HepG2 (cell line): ENCODE measurements at regions of chr2 and their contacts with region 1.

Region 1: GRCh38 chr2:240856151-240856980 is 12.3 kb upstream of the AGXT start:
- DNase-seq: peak; percentile 87
- ATAC-seq: peak; percentile 86
- H3K4me3 ChIP-seq: peak overlapping the region in 2 of 3 experiments; percentile 9 to 63; a peak in 3 of 6 replicates
- H3K27ac ChIP-seq: peak overlapping the region; percentile 88
- H3K4me1 ChIP-seq: peaks cover 46% of the 10 kb centered on the region
- H3K27me3 ChIP-seq: peaks cover 3 to 23% of the 10 kb centered on the region in 2 experiments; a peak in 3 of 5 replicates
- CTCF ChIP-seq: peak; percentile 99
- EP300 ChIP-seq: 0 out of 4 replicates have a peak, but pooled peaks of 1 of the 2 experiments have one; percentile 22
- POLR2A ChIP-seq: peak in 1 of 2 experiments; percentile 25; a peak in 2 of 4 replicates
- RAD21 ChIP-seq: peak; percentile 100

Region 2: DNA sequence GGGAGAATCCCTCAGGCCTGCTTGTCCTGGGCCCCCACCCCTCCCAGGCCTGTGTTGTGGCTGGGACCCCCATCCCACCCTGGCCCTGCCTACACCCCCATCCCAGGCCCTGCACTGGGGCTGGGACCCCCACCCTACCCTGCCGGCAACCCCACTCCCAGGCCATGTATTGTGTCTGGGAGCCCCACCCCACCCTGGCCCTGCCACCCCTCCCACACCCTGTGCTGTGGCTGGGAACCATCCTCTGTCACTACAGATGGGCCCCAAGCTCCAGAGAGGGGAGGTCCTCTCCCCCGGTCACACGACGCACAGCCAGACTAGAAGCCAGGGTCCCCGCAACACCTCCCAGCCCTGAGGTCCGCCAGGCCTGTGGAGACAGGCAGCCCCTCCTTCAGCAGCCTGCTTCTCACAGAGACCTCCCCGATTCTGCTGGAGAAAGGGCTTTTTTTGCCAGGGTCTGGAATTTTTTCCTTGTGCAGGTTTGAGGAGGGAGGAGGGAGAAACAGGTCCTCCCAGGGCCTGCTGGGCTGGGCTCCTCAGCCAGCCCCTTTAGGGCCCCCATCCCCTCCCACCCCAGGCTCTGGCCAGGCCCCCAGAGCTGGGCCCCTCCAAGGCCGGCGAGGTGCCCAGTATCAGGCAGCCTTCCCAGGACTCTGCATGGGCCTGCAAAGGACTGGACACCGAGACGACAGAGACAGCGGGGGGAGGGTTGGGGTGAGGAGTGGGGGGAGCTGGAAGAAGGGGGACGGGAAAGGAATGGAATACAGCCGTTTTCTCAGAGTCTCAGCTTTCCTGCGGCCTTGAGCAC is 64.3 kb before region 1 on chr2:
- CTCF ChIA-PET with region 1: no interaction called
- POLR2A ChIA-PET with region 1: no interaction called
- in situ Hi-C with region 1: no loop called
- intact Hi-C with region 1: no loop called
- DNase-seq: no peak
- ATAC-seq: no peak
- H3K4me3 ChIP-seq: no peak overlapping the region
- H3K27ac ChIP-seq: no peak overlapping the region
- H3K4me1 ChIP-seq: peaks cover 19% of the 10 kb centered on the region
- H3K27me3 ChIP-seq: peaks cover 28 to 84% of the 10 kb centered on the region in 2 experiments
- CTCF ChIP-seq: no peak
- EP300 ChIP-seq: no peak
- POLR2A ChIP-seq: no peak
- RAD21 ChIP-seq: no peak

Region 3: GRCh38 chr2:240868286-240869108 is 12.1 kb after region 1 on chr2 and contains the start of gene AGXT:
- CTCF ChIA-PET with region 1: interaction called, 13 read pairs
- POLR2A ChIA-PET with region 1: interaction called, 83 read pairs
- in situ Hi-C with region 1: no loop called
- intact Hi-C with region 1: no loop called
- DNase-seq: peak; percentile 71
- ATAC-seq: peak; percentile 74
- H3K4me3 ChIP-seq: peak within 1 kb of the TSS in 2 of 3 experiments; percentile 26 to 52; a peak in 4 of 6 replicates
- H3K27ac ChIP-seq: peak within 1 kb of the TSS; percentile 89
- H3K4me1 ChIP-seq: peaks cover 98% of the 10 kb centered on the region
- H3K27me3 ChIP-seq: 0 out of 5 replicates have a peak, but pooled peaks cover 0 to under 1% of the 10 kb centered on the region in 2 experiments
- CTCF ChIP-seq: peak; percentile 47; the same call in 1 of the 2 replicates
- EP300 ChIP-seq: 0 out of 4 replicates have a peak, but pooled peaks of 1 of the 2 experiments have one; percentile 14
- POLR2A ChIP-seq: peak in 1 of 2 experiments; percentile 36; a peak in 1 of 4 replicates
- RAD21 ChIP-seq: no peak
- total RNA-seq, gene AGXT: 30.5 and 41.9 TPM in 2 replicates

Region 4: DNA sequence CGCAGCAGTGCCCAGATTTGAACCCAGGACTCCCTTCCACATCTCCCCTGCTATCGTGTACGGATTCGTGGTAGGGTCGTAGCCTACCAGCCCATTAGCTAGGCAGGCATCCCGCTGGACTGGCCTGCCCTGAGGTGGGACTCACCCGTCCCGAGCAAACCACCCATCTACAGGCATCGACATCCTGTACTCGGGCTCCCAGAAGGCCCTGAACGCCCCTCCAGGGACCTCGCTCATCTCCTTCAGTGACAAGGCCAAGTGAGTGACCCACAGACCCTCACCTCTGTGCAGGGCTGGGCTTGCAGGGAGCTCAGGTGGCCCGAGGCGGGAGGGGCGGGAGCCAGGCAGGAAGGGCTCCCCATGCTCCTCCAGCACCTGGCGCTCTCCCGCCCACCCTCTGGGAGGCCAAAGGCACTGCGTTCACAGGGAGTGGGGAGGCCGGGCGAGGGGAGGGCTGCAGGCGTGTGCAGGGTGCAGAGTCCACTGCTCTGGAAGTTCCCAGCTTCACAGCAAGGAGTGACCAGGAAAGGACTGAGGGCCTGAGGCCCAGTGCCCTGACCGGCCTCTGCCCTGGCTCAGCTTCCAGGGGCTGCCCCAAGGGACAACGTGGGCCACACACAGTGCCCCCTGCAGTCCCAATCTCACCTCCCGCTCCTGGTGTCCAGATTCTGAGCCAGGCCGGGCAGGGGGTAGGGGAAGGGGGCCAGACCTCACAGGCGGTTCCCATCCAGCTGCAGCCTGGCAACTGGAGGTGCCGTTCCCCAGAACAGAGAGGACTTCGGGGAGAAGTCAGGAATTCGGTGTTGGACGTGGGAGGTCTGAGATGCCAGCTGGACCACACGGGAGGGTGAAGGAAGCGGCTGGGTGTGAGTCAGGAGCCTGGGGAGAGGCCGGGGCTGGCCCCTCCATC is 17.7 kb after region 1 on chr2:
- CTCF ChIA-PET with region 1: interaction called, 13 read pairs
- POLR2A ChIA-PET with region 1: interaction called, 83 read pairs
- in situ Hi-C with region 1: no loop called
- intact Hi-C with region 1: loop called (anchors 1 kb)
- DNase-seq: peak; percentile 92
- ATAC-seq: peak; percentile 87
- H3K4me3 ChIP-seq: peak overlapping the region in 1 of 3 experiments; percentile 39; a peak in 2 of 6 replicates
- H3K27ac ChIP-seq: peak overlapping the region; percentile 88
- H3K4me1 ChIP-seq: peaks cover 88% of the 10 kb centered on the region
- H3K27me3 ChIP-seq: no peaks in the 10 kb centered on the region
- CTCF ChIP-seq: peak; percentile 74
- EP300 ChIP-seq: peak; percentile 48 to 80; a peak in 3 of 4 replicates
- POLR2A ChIP-seq: peak in 1 of 2 experiments; percentile 72; a peak in 2 of 4 replicates
- RAD21 ChIP-seq: peak; percentile 90

Region 5: DNA sequence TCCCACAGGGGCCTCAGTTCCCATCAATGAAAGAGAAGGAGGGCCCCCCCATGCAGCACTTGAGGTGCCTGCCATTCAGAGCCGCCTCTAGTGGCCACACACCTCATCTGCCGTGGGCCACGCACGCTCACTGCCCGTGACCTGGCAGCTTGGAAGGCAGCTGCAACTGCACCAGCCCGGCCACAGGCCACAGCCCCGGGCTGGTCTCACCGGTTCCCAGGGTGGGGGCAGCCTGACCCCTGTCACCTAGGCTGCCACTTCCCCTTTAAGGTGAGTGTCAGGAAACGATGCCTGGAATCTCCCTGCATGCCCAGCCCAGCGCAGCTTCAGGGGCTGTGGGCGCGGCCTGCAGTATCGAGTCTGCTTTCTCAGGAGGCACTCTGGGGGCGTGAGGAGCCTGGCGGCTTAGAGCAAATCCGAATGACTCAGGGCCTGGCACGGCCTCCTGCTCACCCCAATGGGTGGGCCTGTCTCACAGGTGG is 37.0 kb after region 1 on chr2:
- CTCF ChIA-PET with region 1: interaction called, 3 read pairs
- POLR2A ChIA-PET with region 1: interaction called, 37 read pairs
- in situ Hi-C with region 1: no loop called
- intact Hi-C with region 1: loop called (anchors 1 kb)
- DNase-seq: no peak
- ATAC-seq: no peak
- H3K4me3 ChIP-seq: no peak overlapping the region; a peak in 1 of 6 replicates
- H3K27ac ChIP-seq: no peak overlapping the region
- H3K4me1 ChIP-seq: peaks cover 89% of the 10 kb centered on the region
- H3K27me3 ChIP-seq: no peaks in the 10 kb centered on the region; a peak in 1 of 5 replicates
- CTCF ChIP-seq: peak; percentile 17; the same call in 1 of the 2 replicates
- EP300 ChIP-seq: no peak
- POLR2A ChIP-seq: no peak
- RAD21 ChIP-seq: no peak

Region 6: GRCh38 chr2:240902615-240903041 is 46.3 kb after region 1 on chr2:
- CTCF ChIA-PET with region 1: interaction called, 3 read pairs
- POLR2A ChIA-PET with region 1: interaction called, 37 read pairs
- in situ Hi-C with region 1: loop called (anchors 5 kb)
- intact Hi-C with region 1: loop called (anchors 1 kb)
- DNase-seq: no peak
- ATAC-seq: peak; percentile 70
- H3K4me3 ChIP-seq: no peak overlapping the region; a peak in 1 of 6 replicates
- H3K27ac ChIP-seq: no peak overlapping the region
- H3K4me1 ChIP-seq: peaks cover 63% of the 10 kb centered on the region
- H3K27me3 ChIP-seq: peaks cover 16 to 63% of the 10 kb centered on the region in 2 experiments
- CTCF ChIP-seq: peak; percentile 41; the same call in 1 of the 2 replicates
- EP300 ChIP-seq: no peak
- POLR2A ChIP-seq: no peak
- RAD21 ChIP-seq: no peak; the same call in 1 of the 2 replicates

Region 7: GRCh38 chr2:240913810-240914644 is 57.7 kb after region 1 on chr2:
- CTCF ChIA-PET with region 1: interaction called, 25 read pairs
- POLR2A ChIA-PET with region 1: interaction called, 16 read pairs
- in situ Hi-C with region 1: no loop called
- intact Hi-C with region 1: loop called (anchors 2 kb)
- DNase-seq: peak; percentile 43
- ATAC-seq: peak; percentile 75
- H3K4me3 ChIP-seq: peak overlapping the region in 2 of 3 experiments; percentile 25 to 68; a peak in 3 of 6 replicates
- H3K27ac ChIP-seq: no peak overlapping the region
- H3K4me1 ChIP-seq: peaks cover 40% of the 10 kb centered on the region
- H3K27me3 ChIP-seq: peaks cover 8 to 74% of the 10 kb centered on the region in 2 experiments; a peak in 4 of 5 replicates
- CTCF ChIP-seq: peak; percentile 98
- EP300 ChIP-seq: no peak
- POLR2A ChIP-seq: no peak
- RAD21 ChIP-seq: peak; percentile 90

Region 8: GRCh38 chr2:240991373-240992263 is 135.3 kb after region 1 on chr2:
- CTCF ChIA-PET with region 1: interaction called, 19 read pairs
- POLR2A ChIA-PET with region 1: interaction called, 5 read pairs
- in situ Hi-C with region 1: no loop called
- intact Hi-C with region 1: loop called (anchors 1 kb)
- DNase-seq: peak; percentile 58
- ATAC-seq: peak; percentile 6; the same call in 2 of the 3 replicates
- H3K4me3 ChIP-seq: peak overlapping the region in 1 of 3 experiments; percentile 19; a peak in 1 of 6 replicates
- H3K27ac ChIP-seq: no peak overlapping the region
- H3K4me1 ChIP-seq: peaks cover 47% of the 10 kb centered on the region
- H3K27me3 ChIP-seq: peaks cover 39 to 95% of the 10 kb centered on the region in 2 experiments
- CTCF ChIP-seq: no peak
- EP300 ChIP-seq: no peak
- POLR2A ChIP-seq: no peak
- RAD21 ChIP-seq: no peak